Mammary epithelial cell (primary cell): ENCODE measurements at regions of chr19 and their contacts with region 1.

Region 1: GRCh38 chr19:12333162-12334159 is at the start of gene ZNF563:
- DNase-seq: peak; percentile 94
- H3K4me3 ChIP-seq: peak within 1 kb of the TSS; percentile 48 to 70 (median 59)
- H3K27ac ChIP-seq: peak within 1 kb of the TSS; percentile 43
- H3K4me1 ChIP-seq: no peaks in the 10 kb centered on the region
- H3K27me3 ChIP-seq: no peaks in the 10 kb centered on the region
- CTCF ChIP-seq: no peak
- total RNA-seq, gene ZNF563: 3.7 to 5.0 TPM

Region 2: DNA sequence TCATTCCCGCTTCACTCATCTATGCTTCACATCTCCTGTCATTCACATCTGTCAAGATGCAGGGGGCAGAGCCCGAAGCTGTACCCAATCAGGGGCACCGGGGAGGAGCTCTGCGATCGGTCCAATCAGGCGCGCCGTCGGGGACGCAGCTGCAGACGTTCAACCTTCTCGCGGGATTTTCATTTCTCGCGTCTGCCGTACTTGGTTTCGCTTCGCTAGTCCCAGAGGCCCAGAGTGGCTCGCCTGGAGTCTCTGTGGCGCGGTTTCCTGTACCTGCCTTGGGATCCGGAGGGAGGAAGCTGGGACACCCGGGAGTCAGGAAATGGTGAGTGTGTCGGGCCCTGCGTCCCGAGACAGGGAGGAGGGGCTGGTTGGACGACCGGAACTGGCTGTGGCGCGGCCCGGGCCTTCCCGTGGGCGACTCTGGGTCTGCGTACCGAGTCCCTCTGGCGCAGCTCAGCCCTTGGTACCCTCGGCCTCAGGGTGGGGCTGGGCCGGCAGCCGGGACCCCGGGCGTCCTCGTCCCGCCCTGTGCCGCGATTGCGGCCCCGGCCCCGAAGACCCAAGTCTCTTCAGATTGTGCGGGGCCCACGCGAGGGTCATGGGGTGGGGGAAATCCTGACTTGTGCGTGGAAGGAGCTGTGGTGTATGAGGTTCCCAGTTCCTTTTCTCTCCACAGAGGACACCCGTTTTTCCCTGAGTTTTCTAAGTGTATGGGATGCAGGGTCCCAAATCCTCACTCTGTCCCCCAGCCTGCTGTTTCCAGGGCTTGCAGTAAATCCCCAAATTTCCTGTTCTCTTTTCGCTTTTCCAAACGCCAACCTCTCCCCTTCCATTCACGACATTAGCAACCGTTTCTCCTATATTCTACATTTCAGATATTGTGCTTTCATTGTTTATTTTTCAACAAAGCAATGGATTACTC is 170.3 kb before region 1 on chr19 and contains the start of gene ZNF136:
- CTCF ChIA-PET with region 1: no interaction called
- dilution Hi-C with region 1: no loop called
- in situ Hi-C with region 1: no loop called
- intact Hi-C with region 1: loop called (anchors 1 kb)
- DNase-seq: peak; percentile 96
- H3K4me3 ChIP-seq: peak within 1 kb of the TSS; percentile 67 to 93 (median 67)
- H3K27ac ChIP-seq: peak within 1 kb of the TSS; percentile 76
- H3K4me1 ChIP-seq: peaks cover 5% of the 10 kb centered on the region
- H3K27me3 ChIP-seq: no peaks in the 10 kb centered on the region
- CTCF ChIP-seq: no peak
- total RNA-seq, gene ZNF136: 5.4 to 6.7 TPM

Region 3: GRCh38 chr19:12294249-12295158 is 39.0 kb before region 1 on chr19 and contains the start of gene ZNF44:
- CTCF ChIA-PET with region 1: no interaction called
- dilution Hi-C with region 1: no loop called
- in situ Hi-C with region 1: no loop called
- intact Hi-C with region 1: loop called (anchors 5 kb)
- DNase-seq: peak; percentile 95
- H3K4me3 ChIP-seq: peak within 1 kb of the TSS; percentile 72 to 82 (median 73)
- H3K27ac ChIP-seq: peak within 1 kb of the TSS; percentile 66
- H3K4me1 ChIP-seq: peaks cover 9% of the 10 kb centered on the region
- H3K27me3 ChIP-seq: no peaks in the 10 kb centered on the region
- CTCF ChIP-seq: no peak
- total RNA-seq, gene ZNF44: 6.6 to 7.3 TPM